AG04450 (cell line): ENCODE measurements at regions of chr2 and their contacts with region 1.

Region 1: GRCh38 chr2:112749755-112750559 is 14.5 kb downstream of the CKAP2L start:
- DNase-seq: peak; percentile 52
- H3K4me3 ChIP-seq: no peak overlapping the region
- H3K27ac ChIP-seq: peak overlapping the region; percentile 47
- H3K27me3 ChIP-seq: no peaks in the 10 kb centered on the region
- CTCF ChIP-seq: peak; percentile 99

Region 2: GRCh38 chr2:112712903-112713584 is 36.9 kb before region 1 on chr2:
- CTCF ChIA-PET with region 1: no interaction called
- POLR2A ChIA-PET with region 1: no interaction called
- DNase-seq: no peak
- H3K4me3 ChIP-seq: no peak overlapping the region
- H3K27ac ChIP-seq: no peak overlapping the region
- H3K27me3 ChIP-seq: no peaks in the 10 kb centered on the region
- CTCF ChIP-seq: no peak

Region 3: DNA sequence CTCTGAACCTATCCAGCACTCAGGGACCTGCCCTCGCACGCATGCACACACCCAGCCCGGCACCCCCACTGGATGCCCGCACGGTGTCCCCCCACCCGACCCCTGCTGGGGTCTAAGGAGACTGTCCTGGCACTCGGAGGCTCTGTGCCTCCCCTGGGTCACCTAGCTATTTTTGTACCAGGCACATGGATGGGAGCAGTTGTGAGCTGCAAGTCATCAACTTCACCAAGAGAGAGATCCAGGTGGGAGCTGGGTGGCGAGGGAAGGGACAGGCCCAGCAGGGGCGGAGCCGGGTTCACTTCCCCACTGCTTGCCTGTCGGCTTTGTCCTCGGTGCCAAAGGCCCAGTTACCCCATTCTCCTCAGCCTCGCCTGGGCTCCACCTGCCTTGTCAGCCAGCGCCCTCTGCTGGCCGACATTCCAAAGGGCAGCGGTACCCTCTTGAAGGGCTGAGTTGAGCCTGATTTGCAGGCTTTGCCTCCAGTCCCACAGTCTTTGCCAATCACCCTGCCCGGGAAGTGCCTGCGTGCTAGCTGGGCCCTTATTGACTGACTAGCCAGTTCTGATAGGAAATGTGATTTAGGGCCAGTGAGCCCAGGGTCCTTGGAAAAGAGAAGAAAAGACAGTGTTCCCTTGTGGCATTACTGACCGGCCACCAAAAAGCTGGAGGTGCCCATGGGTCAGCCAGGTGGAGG is 23.3 kb before region 1 on chr2:
- CTCF ChIA-PET with region 1: interaction called, 11 read pairs
- POLR2A ChIA-PET with region 1: no interaction called
- DNase-seq: peak; percentile 81
- H3K4me3 ChIP-seq: no peak overlapping the region
- H3K27ac ChIP-seq: no peak overlapping the region
- H3K27me3 ChIP-seq: no peaks in the 10 kb centered on the region
- CTCF ChIP-seq: peak; percentile 97

Region 4: GRCh38 chr2:112764071-112765044 is 14.4 kb after region 1 on chr2 and contains the start of gene CKAP2L:
- CTCF ChIA-PET with region 1: interaction called, 45 read pairs
- POLR2A ChIA-PET with region 1: no interaction called
- DNase-seq: peak; percentile 95
- H3K4me3 ChIP-seq: peak within 1 kb of the TSS; percentile 88
- H3K27ac ChIP-seq: peak within 1 kb of the TSS; percentile 54
- H3K27me3 ChIP-seq: no peaks in the 10 kb centered on the region
- CTCF ChIP-seq: no peak
- polyA plus RNA-seq, gene CKAP2L: 2.9 and 4.4 TPM in 2 replicates

Region 5: GRCh38 chr2:112782234-112782799 is 32.4 kb after region 1 on chr2:
- CTCF ChIA-PET with region 1: interaction called, 15 read pairs
- POLR2A ChIA-PET with region 1: no interaction called
- DNase-seq: no peak
- H3K4me3 ChIP-seq: no peak overlapping the region
- H3K27ac ChIP-seq: no peak overlapping the region
- H3K27me3 ChIP-seq: no peaks in the 10 kb centered on the region
- CTCF ChIP-seq: no peak

Region 6: GRCh38 chr2:112947374-112947773 is 197.4 kb after region 1 on chr2:
- CTCF ChIA-PET with region 1: interaction called, 541 read pairs
- POLR2A ChIA-PET with region 1: no interaction called
- DNase-seq: no peak
- H3K4me3 ChIP-seq: no peak overlapping the region
- H3K27ac ChIP-seq: no peak overlapping the region
- H3K27me3 ChIP-seq: peaks cover 24% of the 10 kb centered on the region
- CTCF ChIP-seq: no peak